Lower leg skin (tissue), 4 donors: ENCODE measurements at regions of chr20 and their contacts with region 1.

Region 1: GRCh38 chr20:58209652-58210397 is 18.6 kb downstream of the ANKRD60 start:
- DNase-seq: peak; percentile 64 to 97
- H3K4me3 ChIP-seq: no peak overlapping the region
- CTCF ChIP-seq: peak in 1 of 3 donors; percentile 97
- POLR2A ChIP-seq: no peak

Region 2: GRCh38 chr20:57514273-57514751 is 695.5 kb before region 1 on chr20:
- intact Hi-C with region 1: loop called (anchors 10 kb)
- DNase-seq: peak; percentile 79 to 95
- H3K4me3 ChIP-seq: no peak overlapping the region
- CTCF ChIP-seq: peak in 1 of 3 donors; percentile 29
- POLR2A ChIP-seq: no peak

Region 3: GRCh38 chr20:58256842-58257241 is 47.0 kb after region 1 on chr20:
- intact Hi-C with region 1: no loop called
- DNase-seq: no peak
- H3K4me3 ChIP-seq: no peak overlapping the region
- CTCF ChIP-seq: no peak
- POLR2A ChIP-seq: no peak